ENCODE measurements at regions of chr2 and their contacts with region 1.

Region 1: GRCh38 chr2:181715033-181715630 is 34.8 kb upstream of the NEUROD1 start:
- DNase-seq: peak; percentile 92
- H3K4me3 Mint-ChIP-seq: no peak overlapping the region
- H3K27ac Mint-ChIP-seq: no peak overlapping the region
- H3K4me1 Mint-ChIP-seq: no peaks in the 10 kb centered on the region
- H3K27me3 Mint-ChIP-seq: peaks cover 23% of the 10 kb centered on the region

Region 2: DNA sequence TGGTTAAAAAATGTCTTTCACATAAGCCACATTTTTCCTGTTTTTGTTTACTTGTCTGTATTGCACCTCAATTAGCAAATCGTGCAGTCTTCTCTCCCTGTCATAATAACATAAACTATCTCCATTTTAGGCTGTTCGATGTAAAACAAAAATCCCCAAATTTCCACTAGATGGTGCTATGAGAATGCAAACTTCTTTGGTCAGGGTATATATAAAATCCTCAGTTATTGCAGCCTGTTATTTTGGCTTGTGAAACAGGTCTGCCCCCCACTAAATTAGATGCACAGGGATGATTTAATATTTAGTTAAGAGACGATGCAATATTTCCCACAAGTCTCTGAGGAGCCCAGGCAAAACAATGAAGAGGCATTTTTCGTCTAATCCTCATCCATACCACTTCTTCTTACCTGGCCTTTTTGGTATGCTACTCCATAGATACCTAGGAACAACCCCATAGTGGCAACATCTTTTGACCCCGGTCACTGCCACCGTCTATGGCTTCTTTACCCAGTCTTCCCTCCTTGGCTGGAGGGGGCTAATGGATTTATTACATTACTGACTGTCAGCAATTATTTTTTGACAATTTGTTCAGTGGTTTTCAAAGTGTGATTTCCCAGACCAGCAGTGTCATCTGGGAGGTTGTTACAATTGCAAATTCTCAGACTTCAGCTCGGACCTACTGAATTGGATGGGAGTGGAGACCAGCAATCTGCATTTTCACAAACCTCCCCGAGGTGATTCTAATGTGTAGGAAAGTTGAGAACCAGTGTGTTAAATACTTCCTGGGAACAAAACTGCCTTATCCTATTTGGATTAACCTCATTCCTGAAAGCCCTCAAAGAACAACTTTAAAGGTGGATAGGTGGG is 1590.6 kb before region 1 on chr2:
- intact Hi-C with region 1: loop called (anchors 1 kb)
- DNase-seq: peak; percentile 61
- H3K4me3 Mint-ChIP-seq: no peak overlapping the region
- H3K27ac Mint-ChIP-seq: no peak overlapping the region
- H3K4me1 Mint-ChIP-seq: peaks cover 3% of the 10 kb centered on the region
- H3K27me3 Mint-ChIP-seq: peaks cover 25% of the 10 kb centered on the region

Region 3: GRCh38 chr2:181077128-181077709 is 637.9 kb before region 1 on chr2:
- intact Hi-C with region 1: loop called (anchors 1 kb)
- DNase-seq: peak; percentile 84
- H3K4me3 Mint-ChIP-seq: no peak overlapping the region
- H3K27ac Mint-ChIP-seq: no peak overlapping the region
- H3K4me1 Mint-ChIP-seq: peaks cover 2% of the 10 kb centered on the region
- H3K27me3 Mint-ChIP-seq: no peaks in the 10 kb centered on the region

Region 4: DNA sequence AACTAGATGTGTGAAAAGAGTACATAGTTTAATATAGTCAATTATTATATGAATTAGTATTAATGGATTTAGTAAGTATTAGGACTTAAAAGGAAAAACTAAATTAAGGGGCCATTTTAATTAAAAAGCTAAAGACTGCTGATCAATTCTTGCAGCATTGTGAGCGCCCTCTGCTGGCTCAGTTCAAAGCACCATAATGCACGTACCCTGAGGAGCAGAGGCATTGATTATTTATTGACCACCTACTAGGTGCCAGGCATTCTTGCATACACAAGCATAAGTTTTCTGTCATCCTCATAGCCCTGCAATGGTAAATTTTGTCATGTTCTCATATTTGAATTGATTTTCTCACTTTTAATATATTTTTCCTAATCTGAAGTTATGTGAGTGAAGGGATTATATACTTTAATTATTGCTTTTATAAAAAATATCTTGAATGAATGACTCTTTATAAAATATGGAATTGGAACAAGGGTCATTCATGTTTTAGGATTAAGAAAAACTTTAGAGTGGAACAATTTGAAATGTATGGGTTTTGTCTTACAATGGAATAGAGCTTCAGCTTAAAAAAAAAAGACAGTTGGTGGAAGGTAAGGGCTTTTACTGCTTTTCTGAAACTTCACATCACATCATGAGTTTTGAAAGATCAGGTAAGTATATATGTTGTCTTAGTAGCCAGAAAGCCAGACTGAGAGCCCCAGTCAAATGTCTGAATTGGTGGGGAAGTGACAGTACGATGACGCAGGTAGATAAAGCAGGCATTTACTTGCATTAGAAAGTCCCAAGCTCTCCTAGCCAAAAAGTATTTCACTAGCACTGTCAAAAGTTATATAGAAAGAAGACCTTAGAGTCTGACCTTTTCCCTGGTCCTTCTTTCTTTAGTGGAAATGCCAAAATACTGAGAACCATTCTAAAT is 248.2 kb before region 1 on chr2:
- intact Hi-C with region 1: loop called (anchors 1 kb)
- DNase-seq: peak; percentile 92
- H3K4me3 Mint-ChIP-seq: peak overlapping the region; percentile 32
- H3K27ac Mint-ChIP-seq: peak overlapping the region; percentile 71
- H3K4me1 Mint-ChIP-seq: peaks cover 72% of the 10 kb centered on the region
- H3K27me3 Mint-ChIP-seq: no peaks in the 10 kb centered on the region

Region 5: DNA sequence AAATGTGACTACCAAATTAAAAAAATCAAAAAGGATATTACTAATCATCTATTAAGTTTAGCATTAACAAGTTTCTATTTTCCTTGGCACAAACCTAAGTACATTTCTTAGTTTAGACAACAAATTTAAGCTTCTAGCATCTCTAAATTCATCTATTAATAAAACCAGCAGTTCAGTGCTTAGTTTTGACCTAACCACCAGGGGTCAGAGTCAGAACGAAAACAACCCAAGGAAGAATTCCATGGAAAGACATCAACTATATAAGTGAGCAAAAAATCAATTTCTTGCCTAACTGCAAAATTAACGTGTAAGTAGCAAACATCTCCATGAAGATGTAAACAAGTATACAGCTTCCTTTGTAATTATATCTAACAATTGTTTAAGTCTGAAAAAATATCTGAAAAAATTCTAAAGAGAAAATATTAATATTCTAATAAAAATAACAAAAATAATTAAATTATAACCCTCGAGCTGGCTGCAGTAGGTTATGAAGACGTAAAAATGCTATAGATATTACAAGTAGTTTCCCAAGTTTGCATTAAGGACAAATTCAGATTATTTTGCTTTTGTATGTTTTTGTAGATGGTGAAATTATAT is 141.9 kb before region 1 on chr2:
- intact Hi-C with region 1: loop called (anchors 2 kb)
- DNase-seq: no peak
- H3K4me3 Mint-ChIP-seq: no peak overlapping the region
- H3K27ac Mint-ChIP-seq: no peak overlapping the region
- H3K4me1 Mint-ChIP-seq: no peaks in the 10 kb centered on the region
- H3K27me3 Mint-ChIP-seq: peaks cover 15% of the 10 kb centered on the region

Measured in activated CD4-positive, alpha-beta T cell treated with anti-CD3 and anti-CD28 coated beads, Interleukin-2, amount 10 ng/mL, durations not matched to agents 24 days and 14 days (primary cell).